Gastrocnemius medialis (tissue), 4 donors: ENCODE measurements at regions of chr11 and their contacts with region 1.

Region 1: DNA sequence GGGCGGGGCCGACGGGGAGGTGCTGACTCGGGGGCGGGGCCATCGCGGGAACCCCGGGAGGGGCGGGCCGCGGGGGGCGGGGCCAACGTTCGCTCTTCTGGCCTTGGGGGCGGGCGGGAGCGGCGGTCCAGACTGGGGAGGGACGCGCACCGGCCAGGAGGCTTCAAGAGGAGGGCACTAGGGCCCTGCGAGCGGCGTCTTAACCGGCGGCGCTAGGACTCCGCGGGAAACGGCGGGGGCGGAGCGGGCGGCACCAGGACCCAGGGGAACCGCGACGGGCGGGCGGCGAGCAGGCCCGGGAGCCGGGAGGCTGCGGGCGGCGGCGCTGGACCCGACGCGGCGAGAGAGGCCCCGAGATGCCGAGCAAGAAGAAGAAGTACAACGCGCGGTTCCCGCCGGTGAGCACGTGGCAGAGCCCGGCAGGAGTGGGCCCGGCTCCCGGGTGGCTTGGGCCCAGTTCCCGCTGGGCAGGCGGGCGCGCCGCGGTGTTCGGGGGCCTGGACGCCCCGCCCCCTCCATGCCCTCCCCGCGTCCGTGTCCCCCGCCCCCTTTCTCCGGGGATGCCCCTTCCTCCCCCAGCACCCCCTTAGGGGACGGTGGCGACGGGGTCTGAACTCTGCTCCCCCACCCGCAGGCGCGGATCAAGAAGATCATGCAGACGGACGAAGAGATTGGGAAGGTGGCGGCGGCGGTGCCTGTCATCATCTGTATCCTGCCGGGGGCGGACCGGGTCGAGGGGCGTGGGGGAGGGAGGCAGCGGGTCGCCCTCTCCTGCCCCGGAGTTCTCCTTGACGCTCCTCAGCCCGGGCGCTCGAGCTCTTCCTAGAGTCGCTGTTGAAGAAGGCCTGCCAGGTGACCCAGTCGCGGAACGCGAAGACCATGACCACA is at the start of gene DRAP1:
- DNase-seq: peak; percentile 99
- ATAC-seq: peak; percentile 66 to 75
- H3K4me3 ChIP-seq: peak within 1 kb of the TSS; percentile 77 to 95 (median 92)
- H3K27ac ChIP-seq: peak within 1 kb of the TSS; percentile 86 to 98 (median 94)
- H3K4me1 ChIP-seq: peaks cover 47 to 49% of the 10 kb centered on the region in 2 donors
- H3K27me3 ChIP-seq: no peaks in the 10 kb centered on the region
- CTCF ChIP-seq: peak in 3 of 5 experiments; percentile 9 to 46 (median 37)
- POLR2A ChIP-seq: peak; percentile 83 to 84
- total RNA-seq, gene DRAP1: 96.7 to 146 (median 110) TPM

Region 2: GRCh38 chr11:65134386-65135253 is 784.8 kb before region 1 on chr11 and contains the start of gene SYVN1:
- in situ Hi-C with region 1: no loop called
- intact Hi-C with region 1: loop called (anchors 5 kb)
- DNase-seq: peak; percentile 96 to 99
- ATAC-seq: peak; percentile 95 to 97
- H3K4me3 ChIP-seq: peak within 1 kb of the TSS; percentile 84 to 99 (median 92)
- H3K27ac ChIP-seq: peak within 1 kb of the TSS; percentile 87 to 99 (median 98)
- H3K4me1 ChIP-seq: peaks cover 27 to 29% of the 10 kb centered on the region in 2 donors
- H3K27me3 ChIP-seq: no peaks in the 10 kb centered on the region
- CTCF ChIP-seq: peak in 1 of 5 experiments; percentile 24
- POLR2A ChIP-seq: peak; percentile 97 to 98
- total RNA-seq, gene SYVN1: 24.6 to 77.5 (median 37.3) TPM

Region 3: DNA sequence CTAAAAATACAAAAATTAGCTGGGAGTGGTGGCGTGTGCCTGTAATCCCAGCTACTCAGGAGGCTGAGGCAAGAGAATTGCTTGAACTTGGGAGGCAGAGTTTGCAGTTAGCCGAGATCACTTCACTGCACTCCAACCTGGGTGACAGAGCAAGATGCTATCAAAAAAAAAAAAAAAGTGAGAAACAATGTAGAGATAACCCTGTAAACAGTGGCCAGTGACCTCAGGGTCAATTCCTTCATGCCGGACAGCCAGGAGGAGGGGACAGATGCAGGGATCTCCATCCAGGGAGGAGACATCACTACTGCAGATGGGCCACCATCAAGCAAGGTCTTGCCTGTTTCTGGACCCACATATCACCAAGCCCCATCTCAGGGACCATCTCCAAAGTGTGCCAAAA is 71.6 kb before region 1 on chr11:
- in situ Hi-C with region 1: no loop called
- intact Hi-C with region 1: no loop called
- DNase-seq: no peak
- ATAC-seq: no peak
- H3K4me3 ChIP-seq: no peak overlapping the region
- H3K27ac ChIP-seq: no peak overlapping the region
- H3K4me1 ChIP-seq: no peaks in the 10 kb centered on the region
- H3K27me3 ChIP-seq: no peaks in the 10 kb centered on the region
- CTCF ChIP-seq: no peak
- POLR2A ChIP-seq: no peak

Region 4: DNA sequence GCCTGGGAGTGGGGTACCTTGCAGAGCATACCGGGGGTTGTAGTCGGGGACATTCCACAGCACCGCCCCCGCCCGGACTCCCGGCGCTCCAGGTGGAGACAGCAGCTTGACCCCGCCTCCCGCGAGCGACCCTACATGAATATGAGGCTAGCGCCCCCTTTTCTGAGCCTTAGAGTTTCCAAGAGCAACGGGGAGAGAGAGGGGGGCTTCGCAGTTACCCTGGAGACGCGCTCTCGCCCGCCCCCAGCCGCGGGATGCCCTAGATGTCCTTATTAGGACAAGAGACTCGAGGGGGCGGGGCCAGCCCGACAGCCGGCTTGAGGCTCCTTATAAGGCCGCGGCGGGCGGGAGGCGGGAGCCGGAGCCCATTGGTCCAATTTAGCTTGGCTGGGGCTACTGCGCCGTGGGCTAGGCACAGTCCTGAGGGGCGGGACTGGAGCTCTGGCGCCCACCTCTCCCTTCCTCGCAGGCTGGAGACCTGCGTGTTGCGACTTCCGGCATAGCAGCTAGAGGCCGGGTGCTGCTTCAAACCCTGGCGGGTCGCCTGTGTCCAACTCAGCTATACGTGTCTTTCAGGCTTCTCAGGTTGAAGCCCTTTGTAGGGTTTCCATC is 60.1 kb before region 1 on chr11:
- in situ Hi-C with region 1: no loop called
- intact Hi-C with region 1: loop called (anchors 1 kb)
- DNase-seq: peak; percentile 97 to 99
- ATAC-seq: peak; percentile 54 to 55
- H3K4me3 ChIP-seq: peak overlapping the region; percentile 88 to 98 (median 91)
- H3K27ac ChIP-seq: peak overlapping the region; percentile 95 to 99 (median 96)
- H3K4me1 ChIP-seq: peaks cover 32 to 37% of the 10 kb centered on the region in 2 donors
- H3K27me3 ChIP-seq: no peaks in the 10 kb centered on the region
- CTCF ChIP-seq: no peak
- POLR2A ChIP-seq: peak; percentile 95 to 97

Region 5: DNA sequence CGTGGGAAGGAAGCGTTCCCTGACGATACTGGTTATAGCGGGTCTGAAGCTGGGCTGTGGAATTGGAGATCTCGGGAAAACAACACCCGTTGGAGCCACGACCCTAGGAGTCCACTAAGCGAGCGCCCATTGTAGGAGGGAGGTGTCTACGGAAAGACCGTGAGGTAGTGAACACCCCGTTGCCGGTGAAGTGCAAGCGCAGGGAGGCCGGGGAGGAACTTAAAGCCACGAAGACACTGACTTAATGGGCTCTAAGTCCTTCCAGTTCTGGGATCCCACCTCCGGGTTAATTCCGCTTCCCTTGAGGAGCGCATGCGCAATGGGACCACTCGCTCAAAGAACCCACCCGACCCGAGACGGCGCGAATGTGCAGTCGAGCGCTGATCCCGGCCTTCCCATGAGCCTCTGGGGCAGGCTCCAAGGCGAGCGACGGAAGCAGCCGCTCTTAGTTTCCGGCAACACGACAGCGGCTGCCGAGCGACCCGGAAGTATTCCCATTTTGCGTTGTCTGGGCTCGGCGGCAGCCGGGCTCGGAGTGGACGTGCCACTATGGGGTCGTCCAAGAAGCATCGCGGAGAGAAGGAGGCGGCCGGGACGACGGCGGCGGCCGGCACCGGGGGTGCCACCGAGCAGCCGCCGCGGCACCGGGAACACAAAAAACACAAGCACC is 42.0 kb after region 1 on chr11 and contains the start of gene SART1:
- in situ Hi-C with region 1: no loop called
- intact Hi-C with region 1: loop called (anchors 1 kb)
- DNase-seq: peak; percentile 97 to 98
- ATAC-seq: peak; percentile 97 to 98
- H3K4me3 ChIP-seq: peak within 1 kb of the TSS; percentile 69 to 100 (median 88)
- H3K27ac ChIP-seq: peak within 1 kb of the TSS; percentile 81 to 96 (median 90)
- H3K4me1 ChIP-seq: peaks cover 16 to 24% of the 10 kb centered on the region in 2 donors
- H3K27me3 ChIP-seq: no peaks in the 10 kb centered on the region
- CTCF ChIP-seq: peak in 1 of 5 experiments; percentile 14
- POLR2A ChIP-seq: peak; percentile 61 to 81
- total RNA-seq, gene SART1: 12.0 to 55.2 (median 33.3) TPM

Region 6: GRCh38 chr11:66268283-66268951 is 349.0 kb after region 1 on chr11 and contains the start of gene RAB1B:
- in situ Hi-C with region 1: no loop called
- intact Hi-C with region 1: loop called (anchors 2 kb)
- DNase-seq: peak; percentile 100
- ATAC-seq: peak; percentile 84
- H3K4me3 ChIP-seq: peak within 1 kb of the TSS; percentile 79 to 99 (median 86)
- H3K27ac ChIP-seq: peak within 1 kb of the TSS; percentile 92 to 99 (median 96)
- H3K4me1 ChIP-seq: peaks cover 19 to 27% of the 10 kb centered on the region in 2 donors
- H3K27me3 ChIP-seq: no peaks in the 10 kb centered on the region
- CTCF ChIP-seq: no peak
- POLR2A ChIP-seq: peak in 1 of 2 donors; percentile 67
- total RNA-seq, gene RAB1B: 96.0 to 194 (median 130) TPM